Calu3 (cell line): ENCODE measurements at regions of chr18 and their contacts with region 1.

Region 1: GRCh38 chr18:35296060-35296459 is 6.0 kb upstream of the ZSCAN30 start:
- DNase-seq: no peak
- H3K4me3 Mint-ChIP-seq: no peak overlapping the region
- H3K27ac Mint-ChIP-seq: no peak overlapping the region
- H3K4me1 Mint-ChIP-seq: peaks cover 10% of the 10 kb centered on the region
- H3K27me3 Mint-ChIP-seq: no peaks in the 10 kb centered on the region
- CTCF ChIP-seq: no peak

Region 2: DNA sequence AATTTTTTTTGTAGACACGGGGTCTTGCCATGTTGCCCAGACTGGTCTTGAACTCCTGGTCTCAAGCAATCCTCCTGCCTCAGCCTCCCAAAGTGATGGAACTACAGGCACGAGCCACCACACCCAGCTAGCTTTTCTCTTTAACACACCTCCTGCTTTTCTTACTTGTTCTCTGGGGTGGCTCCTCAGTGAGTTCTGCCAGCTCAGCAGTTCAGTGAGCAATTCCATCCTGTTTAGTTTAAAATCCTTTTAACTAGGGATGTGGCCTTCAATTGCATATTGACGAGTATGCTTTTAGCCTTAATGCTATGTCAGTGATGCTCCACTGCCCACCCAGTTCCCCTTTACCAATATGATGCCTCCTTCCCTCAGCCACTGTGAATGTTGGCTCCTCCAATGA is 39.1 kb before region 1 on chr18:
- CTCF ChIA-PET with region 1: no interaction called
- intact Hi-C with region 1: loop called (anchors 5 kb)
- DNase-seq: no peak
- H3K4me3 Mint-ChIP-seq: no peak overlapping the region
- H3K27ac Mint-ChIP-seq: no peak overlapping the region
- H3K4me1 Mint-ChIP-seq: no peaks in the 10 kb centered on the region
- H3K27me3 Mint-ChIP-seq: no peaks in the 10 kb centered on the region
- CTCF ChIP-seq: no peak

Region 3: DNA sequence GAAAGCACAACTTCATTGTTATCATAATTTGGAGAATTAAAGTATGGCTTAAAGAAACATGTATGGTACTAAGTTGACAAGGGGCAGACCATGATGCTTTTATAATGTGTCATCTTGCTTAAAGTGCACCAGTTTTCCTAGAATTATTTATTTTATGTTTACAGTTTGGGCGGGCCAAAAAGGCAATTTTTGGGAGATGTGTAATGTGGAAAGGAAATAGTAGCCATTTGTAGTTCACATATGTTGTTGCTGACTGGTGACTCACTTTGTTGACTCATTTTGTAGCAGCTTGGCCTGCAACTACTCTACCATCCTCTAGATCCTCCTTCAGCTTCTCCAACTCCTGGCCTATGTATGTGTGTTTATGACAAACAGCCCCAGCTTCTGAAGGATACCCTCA is 13.7 kb before region 1 on chr18:
- CTCF ChIA-PET with region 1: no interaction called
- intact Hi-C with region 1: no loop called
- DNase-seq: no peak
- H3K4me3 Mint-ChIP-seq: no peak overlapping the region
- H3K27ac Mint-ChIP-seq: no peak overlapping the region
- H3K4me1 Mint-ChIP-seq: no peaks in the 10 kb centered on the region
- H3K27me3 Mint-ChIP-seq: no peaks in the 10 kb centered on the region
- CTCF ChIP-seq: no peak